ENCODE measurements at regions of chr11 and their contacts with region 1.

Region 1: DNA sequence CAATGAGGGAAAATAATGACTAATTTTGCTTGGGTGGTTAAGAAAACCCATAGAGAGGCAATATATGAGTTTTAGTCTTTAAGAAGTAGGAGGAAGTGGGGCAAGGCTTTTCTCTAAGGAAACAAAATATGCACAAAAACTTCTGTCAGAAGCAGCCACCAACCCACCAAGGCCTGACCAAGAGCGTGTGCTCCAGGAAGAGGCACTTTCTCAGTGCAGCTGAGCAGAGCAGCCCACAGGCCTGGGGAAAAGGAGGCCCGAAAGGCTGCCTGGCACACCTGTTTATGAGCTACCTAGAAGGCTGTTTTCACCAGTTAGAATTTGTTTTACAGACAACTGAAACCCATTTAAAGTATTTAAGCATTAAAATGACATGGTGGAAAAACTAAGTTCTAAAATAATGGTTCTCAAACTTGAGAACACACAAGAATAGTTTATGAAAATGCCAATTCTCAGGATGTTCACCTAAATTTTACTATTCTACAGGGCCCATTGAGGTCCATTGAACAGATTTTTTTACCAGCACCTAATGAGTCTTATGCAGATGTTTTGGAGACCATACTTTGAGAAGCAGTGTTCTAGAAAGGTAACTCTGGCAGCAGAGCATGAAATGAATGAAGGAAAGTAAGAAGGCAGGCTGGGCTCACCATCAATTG is 160.5 kb upstream of the DDI1 start:
- DNase-seq: peak; percentile 70
- H3K4me3 ChIP-seq: no peak overlapping the region
- H3K27ac ChIP-seq: peak overlapping the region; percentile 47
- H3K4me1 ChIP-seq: peaks cover 23% of the 10 kb centered on the region
- CTCF ChIP-seq: no peak

Region 2: DNA sequence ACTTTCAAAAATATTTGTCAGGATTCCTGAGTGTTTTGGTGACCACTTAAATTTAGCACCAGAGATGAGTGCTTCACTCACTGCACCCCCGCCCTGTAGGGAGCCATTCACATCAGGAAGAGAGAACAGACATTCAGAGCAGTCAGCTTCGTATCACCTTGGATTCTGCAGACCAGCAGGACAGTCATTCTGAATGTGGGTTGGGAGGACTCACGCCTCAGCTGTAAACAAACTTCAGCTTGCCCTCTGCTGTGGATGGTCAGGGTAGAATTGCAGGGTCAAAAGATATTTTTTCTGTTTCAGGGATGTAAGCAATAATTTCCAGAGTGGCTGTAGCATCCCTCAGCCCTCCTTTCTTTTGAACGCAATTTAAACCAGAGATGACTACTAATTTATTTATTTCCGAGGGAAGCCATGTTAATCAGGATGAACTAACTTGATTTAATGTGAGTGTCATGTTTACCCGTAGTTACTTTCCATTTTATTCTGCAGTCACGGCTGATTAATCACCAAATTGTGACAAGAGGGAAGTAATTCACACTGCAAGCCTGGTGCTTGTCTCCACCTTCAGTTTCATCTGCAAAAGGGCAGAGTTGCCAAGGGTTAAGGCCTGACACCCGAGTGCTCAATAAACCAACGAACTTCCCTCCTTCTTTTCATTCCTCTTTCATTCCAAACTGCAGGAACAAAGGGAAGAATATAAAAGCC is 13.7 kb before region 1 on chr11:
- CTCF ChIA-PET with region 1: no interaction called
- POLR2A ChIA-PET with region 1: interaction called, 12 read pairs
- intact Hi-C with region 1: no loop called
- DNase-seq: peak; percentile 16
- H3K4me3 ChIP-seq: no peak overlapping the region
- H3K27ac ChIP-seq: no peak overlapping the region
- H3K4me1 ChIP-seq: peaks cover 9% of the 10 kb centered on the region
- CTCF ChIP-seq: no peak; the same call in 1 of the 2 replicates